Lower lobe of right lung (tissue), 2 donors: ENCODE measurements at regions of chr6 and their contacts with region 1.

Region 1: DNA sequence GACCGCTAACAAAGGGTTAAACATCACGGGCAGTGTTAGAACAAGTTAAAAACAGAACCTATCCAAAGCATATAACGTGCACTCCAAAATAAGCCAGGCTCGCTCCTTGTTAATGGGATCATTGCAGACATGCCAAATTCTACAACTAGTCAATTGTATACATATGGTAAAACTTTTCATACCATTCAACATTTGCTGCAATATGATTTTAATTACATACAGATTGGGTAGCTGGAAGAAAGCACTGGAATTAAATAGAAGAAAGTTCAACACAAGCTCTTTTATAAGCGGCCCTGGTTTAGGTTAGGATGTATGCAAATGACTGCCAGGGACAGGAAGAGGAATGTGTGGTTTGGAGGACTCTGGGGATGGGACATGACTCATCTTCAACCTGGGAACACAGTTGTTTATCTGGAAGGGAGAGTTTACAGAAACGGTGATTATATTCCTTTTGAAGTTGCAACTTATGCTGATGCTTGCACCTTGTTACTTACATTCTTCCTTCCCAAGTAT is 62.5 kb upstream of the TIAM2 start:
- DNase-seq: no peak
- ATAC-seq: no peak
- H3K4me3 ChIP-seq: no peak overlapping the region
- H3K27ac ChIP-seq: no peak overlapping the region
- H3K4me1 ChIP-seq: no peaks in the 10 kb centered on the region
- H3K27me3 ChIP-seq: no peaks in the 10 kb centered on the region
- CTCF ChIP-seq: no peak

Region 2: GRCh38 chr6:154696661-154697060 is 235.9 kb before region 1 on chr6:
- intact Hi-C with region 1: no loop called
- DNase-seq: no peak
- ATAC-seq: no peak
- H3K4me3 ChIP-seq: no peak overlapping the region
- H3K27ac ChIP-seq: no peak overlapping the region
- H3K4me1 ChIP-seq: no peaks in the 10 kb centered on the region
- H3K27me3 ChIP-seq: no peaks in the 10 kb centered on the region
- CTCF ChIP-seq: no peak

Region 3: GRCh38 chr6:155174576-155175211 is 242.1 kb after region 1 on chr6:
- intact Hi-C with region 1: loop called (anchors 10 kb)
- DNase-seq: no peak
- ATAC-seq: peak; percentile 85 to 87
- H3K4me3 ChIP-seq: no peak overlapping the region
- H3K27ac ChIP-seq: no peak overlapping the region
- H3K4me1 ChIP-seq: peaks cover 13% of the 10 kb centered on the region
- H3K27me3 ChIP-seq: no peaks in the 10 kb centered on the region
- CTCF ChIP-seq: peak; percentile 47